ENCODE measurements at regions of chr3 and their contacts with region 1.

Region 1: GRCh38 chr3:54433846-54434245 is 311.5 kb downstream of the CACNA2D3 start:
- DNase-seq: peak; percentile 59 to 69
- H3K4me3 ChIP-seq: no peak overlapping the region
- H3K27ac ChIP-seq: no peak overlapping the region
- H3K4me1 ChIP-seq: 0 out of 7 replicates have a peak, but pooled peaks cover 0 to 1% (median 0%) of the 10 kb centered on the region in 4 experiments
- H3K27me3 ChIP-seq: no peaks in the 10 kb centered on the region
- CTCF ChIP-seq: peak; percentile 87 to 99 (median 98)
- EP300 ChIP-seq: no peak
- POLR2A ChIP-seq: no peak
- RAD21 ChIP-seq: peak; percentile 79 to 88

Region 2: GRCh38 chr3:54393150-54393549 is 40.7 kb before region 1 on chr3:
- CTCF ChIA-PET with region 1: no interaction called
- POLR2A ChIA-PET with region 1: no interaction called
- DNase-seq: no peak
- H3K4me3 ChIP-seq: no peak overlapping the region
- H3K27ac ChIP-seq: no peak overlapping the region
- H3K4me1 ChIP-seq: no peaks in the 10 kb centered on the region
- H3K27me3 ChIP-seq: no peaks in the 10 kb centered on the region
- CTCF ChIP-seq: no peak
- EP300 ChIP-seq: no peak
- POLR2A ChIP-seq: no peak
- RAD21 ChIP-seq: no peak

Region 3: DNA sequence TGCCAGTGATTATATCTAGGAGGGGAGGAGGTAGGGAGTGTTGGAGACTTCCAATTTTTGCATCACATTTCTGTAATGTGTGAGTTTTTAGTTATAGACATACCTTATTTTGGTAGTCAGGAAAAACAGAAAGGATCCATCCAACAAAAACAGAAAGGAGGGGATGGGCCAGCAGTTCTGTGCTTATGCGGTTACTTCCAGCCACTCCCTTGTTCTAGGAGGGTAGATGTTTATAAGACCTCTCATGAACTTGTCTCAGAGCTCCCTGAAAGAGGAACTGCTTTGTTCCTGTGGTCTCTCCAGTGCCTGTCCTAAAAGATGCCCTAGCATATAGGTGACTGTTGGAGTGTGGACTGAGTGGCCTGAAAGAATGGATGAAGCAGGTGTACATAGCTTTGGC is 11.8 kb after region 1 on chr3:
- CTCF ChIA-PET with region 1: interaction called, 13 read pairs
- POLR2A ChIA-PET with region 1: no interaction called
- DNase-seq: no peak
- H3K4me3 ChIP-seq: no peak overlapping the region
- H3K27ac ChIP-seq: no peak overlapping the region
- H3K4me1 ChIP-seq: no peaks in the 10 kb centered on the region
- H3K27me3 ChIP-seq: no peaks in the 10 kb centered on the region
- CTCF ChIP-seq: no peak
- EP300 ChIP-seq: no peak
- POLR2A ChIP-seq: no peak
- RAD21 ChIP-seq: no peak

Region 4: GRCh38 chr3:54527953-54528352 is 94.1 kb after region 1 on chr3:
- CTCF ChIA-PET with region 1: interaction called, 36 read pairs
- POLR2A ChIA-PET with region 1: no interaction called
- DNase-seq: no peak
- H3K4me3 ChIP-seq: no peak overlapping the region
- H3K27ac ChIP-seq: no peak overlapping the region
- H3K4me1 ChIP-seq: peaks cover 0 to 4% (median 0%) of the 10 kb centered on the region in 4 experiments; a peak in 1 of 7 replicates
- H3K27me3 ChIP-seq: no peaks in the 10 kb centered on the region
- CTCF ChIP-seq: no peak
- EP300 ChIP-seq: no peak
- POLR2A ChIP-seq: no peak
- RAD21 ChIP-seq: no peak

Measured in H1 (cell line).